ENCODE measurements at regions of chr19 and their contacts with region 1.

Region 1: GRCh38 chr19:14689598-14690503 is at the start of gene ZNF333:
- DNase-seq: peak; percentile 54 to 91
- ATAC-seq: peak; percentile 98 to 99
- H3K4me3 ChIP-seq: peak within 1 kb of the TSS; percentile 70
- H3K27ac ChIP-seq: peak within 1 kb of the TSS; percentile 90 to 93
- H3K4me1 ChIP-seq: no peaks in the 10 kb centered on the region
- CTCF ChIP-seq: no peak
- EP300 ChIP-seq: no peak
- POLR2A ChIP-seq: peak; percentile 42
- RAD21 ChIP-seq: no peak
- polyA plus RNA-seq, gene ZNF333: 5.7 and 7.0 TPM in 2 replicates

Region 2: DNA sequence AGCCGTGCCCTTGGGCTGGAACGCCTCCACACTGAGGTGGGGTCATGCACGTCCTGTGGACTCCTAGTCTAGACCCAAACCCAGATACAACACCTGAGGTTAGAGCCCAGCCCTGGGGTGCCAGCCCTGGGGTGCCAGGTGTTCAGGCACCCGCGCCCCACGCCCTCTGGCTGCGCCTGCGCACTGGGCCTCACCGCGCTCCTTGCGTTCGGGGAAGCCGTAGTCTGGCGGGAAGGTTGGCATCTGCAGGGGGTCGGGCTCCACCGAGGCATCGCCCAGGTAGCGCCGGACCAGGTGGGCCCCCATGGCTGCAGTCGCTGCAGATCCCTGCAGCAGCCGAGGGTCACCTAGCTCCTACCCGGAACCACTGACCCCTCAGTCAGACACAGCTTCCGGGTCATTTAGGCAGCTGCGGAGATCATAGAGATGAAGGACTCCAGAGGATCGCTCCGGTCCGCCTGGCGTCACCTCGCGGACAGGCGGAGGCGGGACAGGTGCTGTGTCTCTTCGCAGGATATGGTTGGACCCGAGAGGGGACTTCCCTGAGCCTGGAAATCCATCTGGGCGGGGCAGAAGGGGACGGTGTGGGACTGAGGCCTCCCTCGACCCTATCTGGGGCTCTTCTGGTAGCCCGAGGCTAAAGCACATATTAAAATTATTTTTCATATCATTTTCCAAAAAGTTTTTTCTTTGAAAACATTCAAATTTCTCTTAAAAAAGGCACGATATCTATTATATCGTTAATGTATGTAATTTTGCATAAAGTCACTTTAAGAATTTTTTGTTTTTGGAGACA is 118.0 kb before region 1 on chr19 and contains the start of gene NDUFB7:
- CTCF ChIA-PET with region 1: interaction called, 81 read pairs
- POLR2A ChIA-PET with region 1: interaction called, 9 read pairs
- DNase-seq: peak; percentile 82 to 96
- ATAC-seq: peak; percentile 96
- H3K4me3 ChIP-seq: peak within 1 kb of the TSS; percentile 85
- H3K27ac ChIP-seq: peak within 1 kb of the TSS; percentile 85 to 98
- H3K4me1 ChIP-seq: peaks cover 6% of the 10 kb centered on the region; the same call in 1 of the 3 replicates
- CTCF ChIP-seq: peak; percentile 55
- EP300 ChIP-seq: no peak
- POLR2A ChIP-seq: peak; percentile 49
- RAD21 ChIP-seq: 0 out of 5 replicates have a peak, but pooled peaks of 1 of the 2 experiments have one; percentile 3
- polyA plus RNA-seq, gene NDUFB7: 73.7 and 82.3 TPM in 2 replicates

Region 3: DNA sequence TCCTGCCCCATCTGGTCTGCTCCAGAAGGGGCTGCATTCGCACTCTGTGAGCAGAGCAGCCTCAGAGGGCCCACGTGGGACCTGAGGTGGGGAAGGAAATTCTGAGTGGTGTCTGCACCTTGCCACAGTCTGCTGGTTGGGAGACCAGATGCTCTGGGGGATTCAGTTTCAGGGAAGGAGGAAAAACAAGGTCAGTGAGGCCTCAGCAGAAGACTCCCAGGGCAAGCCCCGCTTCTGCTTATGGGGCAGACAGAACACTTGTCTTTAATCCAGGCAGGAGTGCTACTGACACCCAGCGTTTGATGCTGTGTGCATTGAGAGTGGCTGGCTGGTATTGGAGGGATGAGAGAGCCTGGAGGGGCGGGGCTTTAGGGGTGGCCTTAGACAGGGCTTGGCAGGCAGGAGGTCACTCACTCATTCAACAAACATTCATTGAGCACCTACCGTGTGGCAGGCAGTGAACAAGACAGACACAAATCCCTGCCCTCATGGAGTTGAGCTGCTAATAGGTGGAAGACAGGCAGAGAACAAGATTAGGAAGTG is 111.9 kb before region 1 on chr19:
- CTCF ChIA-PET with region 1: interaction called, 81 read pairs
- POLR2A ChIA-PET with region 1: interaction called, 9 read pairs
- DNase-seq: no peak
- ATAC-seq: peak in 1 of 2 experiments; percentile 47; a peak in 3 of 6 replicates
- H3K4me3 ChIP-seq: no peak overlapping the region
- H3K27ac ChIP-seq: no peak overlapping the region
- H3K4me1 ChIP-seq: peaks cover 3% of the 10 kb centered on the region; the same call in 1 of the 3 replicates
- CTCF ChIP-seq: no peak
- EP300 ChIP-seq: no peak
- POLR2A ChIP-seq: no peak
- RAD21 ChIP-seq: no peak

Region 4: GRCh38 chr19:14632279-14632678 is 57.6 kb before region 1 on chr19:
- CTCF ChIA-PET with region 1: no interaction called
- POLR2A ChIA-PET with region 1: no interaction called
- DNase-seq: peak; percentile 19 to 45
- ATAC-seq: peak in 1 of 2 experiments; percentile 40; a peak in 2 of 6 replicates
- H3K4me3 ChIP-seq: no peak overlapping the region
- H3K27ac ChIP-seq: no peak overlapping the region
- H3K4me1 ChIP-seq: no peaks in the 10 kb centered on the region
- CTCF ChIP-seq: no peak
- EP300 ChIP-seq: no peak
- POLR2A ChIP-seq: no peak
- RAD21 ChIP-seq: no peak